ENCODE measurements at regions of chr10 and their contacts with region 1.

Region 1: DNA sequence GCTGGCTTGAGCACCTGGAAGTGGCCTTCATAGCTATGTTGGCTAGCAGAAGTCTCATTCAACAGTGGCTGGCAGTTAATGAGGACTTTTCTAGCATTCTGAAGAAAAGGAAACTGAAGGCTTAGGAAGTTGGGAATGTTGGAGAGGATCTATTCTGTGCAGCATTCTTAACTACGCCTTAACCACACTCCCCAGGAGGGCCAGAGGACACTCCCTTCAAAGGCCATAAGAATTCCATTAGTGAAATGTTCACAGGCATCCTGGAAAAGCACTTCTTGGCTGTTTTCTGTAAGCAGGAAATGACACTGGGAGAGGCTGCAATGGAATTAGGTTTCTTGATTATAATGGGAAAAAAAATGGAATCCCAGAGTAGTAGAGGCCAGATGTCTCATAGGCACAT is 188.9 kb downstream of the ARHGAP12 start:
- DNase-seq: no peak
- ATAC-seq: no peak
- H3K4me3 ChIP-seq: no peak overlapping the region
- H3K27ac ChIP-seq: no peak overlapping the region
- H3K4me1 ChIP-seq: no peaks in the 10 kb centered on the region
- H3K27me3 ChIP-seq: no peaks in the 10 kb centered on the region

Region 2: DNA sequence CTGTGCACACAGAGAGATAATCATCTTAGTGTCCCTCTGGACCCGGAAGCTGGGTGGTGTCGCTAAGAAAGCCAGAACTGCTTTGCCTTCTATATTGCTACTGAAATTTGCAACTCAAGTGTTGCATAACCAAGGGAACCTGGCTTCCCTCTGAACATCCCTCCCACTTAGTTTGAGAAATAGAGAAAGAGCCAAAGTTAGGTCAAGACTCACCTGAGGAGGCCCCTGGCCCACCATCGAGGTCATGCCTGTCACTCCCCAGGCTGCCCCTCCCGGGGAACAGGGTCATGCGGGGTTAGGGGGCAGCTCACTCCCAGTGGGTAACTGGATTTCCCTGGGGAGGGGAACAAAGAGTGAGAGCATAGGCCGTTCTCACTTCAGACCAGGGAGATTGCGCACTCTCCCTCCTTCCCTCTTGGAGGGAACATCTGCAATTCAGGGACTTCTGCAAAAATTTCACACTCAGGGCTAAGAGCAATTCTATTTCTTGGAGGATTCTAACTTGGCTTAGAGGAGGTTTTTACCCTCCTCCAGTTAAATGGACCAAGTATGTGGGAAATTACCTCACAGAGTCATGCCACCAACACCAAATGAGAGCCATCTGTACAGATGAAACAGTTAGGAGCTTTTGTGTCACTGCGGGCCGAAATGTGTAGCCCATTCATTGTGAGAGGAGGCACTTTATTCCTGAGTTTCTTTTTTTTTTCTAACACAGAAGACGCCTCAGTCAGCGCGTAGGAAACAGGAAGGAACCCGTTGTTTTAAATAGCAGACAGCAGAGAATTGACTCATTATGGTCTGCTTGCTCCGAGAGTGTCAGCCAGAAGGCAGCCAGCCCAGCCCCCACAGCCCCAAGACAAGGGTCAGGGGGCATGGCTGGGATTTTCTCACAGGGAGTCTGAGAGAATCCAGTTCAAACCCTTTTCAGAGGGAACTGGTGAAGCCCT is 32.3 kb before region 1 on chr10:
- intact Hi-C with region 1: loop called in 1 of 2 experiments (anchors 5 kb)
- DNase-seq: peak; percentile 88 to 89
- ATAC-seq: peak; percentile 70
- H3K4me3 ChIP-seq: no peak overlapping the region
- H3K27ac ChIP-seq: no peak overlapping the region
- H3K4me1 ChIP-seq: no peaks in the 10 kb centered on the region
- H3K27me3 ChIP-seq: no peaks in the 10 kb centered on the region

Region 3: GRCh38 chr10:31759799-31760626 is 20.3 kb after region 1 on chr10:
- intact Hi-C with region 1: no loop called
- DNase-seq: peak; percentile 97
- ATAC-seq: peak; percentile 95
- H3K4me3 ChIP-seq: peak overlapping the region; percentile 71 to 74
- H3K27ac ChIP-seq: peak overlapping the region; percentile 17 to 92
- H3K4me1 ChIP-seq: no peaks in the 10 kb centered on the region
- H3K27me3 ChIP-seq: no peaks in the 10 kb centered on the region